Calu3 (cell line): ENCODE measurements at regions of chr17 and their contacts with region 1.

Region 1: GRCh38 chr17:59004338-59005111 is 102.2 kb downstream of the TRIM37 start:
- DNase-seq: peak; percentile 53
- H3K4me3 Mint-ChIP-seq: no peak overlapping the region
- H3K27ac Mint-ChIP-seq: no peak overlapping the region
- H3K4me1 Mint-ChIP-seq: no peaks in the 10 kb centered on the region
- H3K27me3 Mint-ChIP-seq: no peaks in the 10 kb centered on the region
- CTCF ChIP-seq: peak; percentile 72

Region 2: GRCh38 chr17:58517734-58518609 is 486.6 kb before region 1 on chr17:
- CTCF ChIA-PET with region 1: interaction called, 7 read pairs
- intact Hi-C with region 1: loop called (anchors 2 kb)
- DNase-seq: peak; percentile 97
- H3K4me3 Mint-ChIP-seq: peak overlapping the region; percentile 85
- H3K27ac Mint-ChIP-seq: peak overlapping the region; percentile 88
- H3K4me1 Mint-ChIP-seq: peaks cover 27% of the 10 kb centered on the region
- H3K27me3 Mint-ChIP-seq: no peaks in the 10 kb centered on the region
- CTCF ChIP-seq: no peak

Region 3: GRCh38 chr17:58587702-58588254 is 416.7 kb before region 1 on chr17:
- CTCF ChIA-PET with region 1: interaction called, 3 read pairs
- intact Hi-C with region 1: loop called (anchors 1 kb)
- DNase-seq: peak; percentile 44
- H3K4me3 Mint-ChIP-seq: no peak overlapping the region
- H3K27ac Mint-ChIP-seq: no peak overlapping the region
- H3K4me1 Mint-ChIP-seq: no peaks in the 10 kb centered on the region
- H3K27me3 Mint-ChIP-seq: no peaks in the 10 kb centered on the region
- CTCF ChIP-seq: peak; percentile 78

Region 4: DNA sequence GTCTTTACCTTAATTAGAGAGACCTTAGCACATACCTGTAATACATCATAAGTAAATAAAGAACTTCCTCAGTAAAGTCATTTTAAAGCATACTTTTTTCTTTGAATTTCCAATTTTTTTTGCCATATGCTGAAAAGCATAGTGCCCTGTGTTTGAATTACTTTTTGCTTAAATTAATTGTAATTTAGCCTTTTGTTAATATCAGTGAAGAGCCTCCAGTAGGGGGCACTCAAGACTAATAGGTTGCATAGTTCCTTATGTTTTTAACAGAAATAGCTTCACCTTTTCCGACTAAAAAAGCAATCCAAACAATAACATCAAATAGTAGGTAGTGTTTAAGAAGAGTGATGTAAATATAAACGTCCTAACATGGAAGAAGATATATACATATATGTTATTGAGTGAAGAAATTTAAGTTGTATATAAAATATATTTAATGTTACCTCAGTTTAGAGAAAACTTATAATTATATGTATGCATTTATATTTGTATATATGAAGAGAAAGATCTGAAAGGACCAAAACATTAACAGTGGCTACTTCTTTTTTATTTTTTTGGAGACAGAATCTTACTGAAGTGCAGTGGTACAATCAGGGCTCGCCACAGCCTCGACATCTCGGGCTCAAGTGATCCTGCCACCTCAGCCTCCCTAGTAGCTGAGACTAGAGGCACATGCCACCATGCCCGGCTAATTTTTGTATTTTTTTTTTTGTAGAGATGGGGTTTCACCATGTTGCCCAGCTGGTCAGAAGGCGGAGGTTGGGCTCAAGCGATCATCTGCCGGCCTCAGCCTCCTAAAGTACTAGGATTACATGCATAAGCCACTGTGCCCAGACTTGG is 293.4 kb before region 1 on chr17:
- CTCF ChIA-PET with region 1: interaction called, 8 read pairs
- intact Hi-C with region 1: loop called (anchors 1 kb)
- DNase-seq: peak; percentile 34
- H3K4me3 Mint-ChIP-seq: no peak overlapping the region
- H3K27ac Mint-ChIP-seq: no peak overlapping the region
- H3K4me1 Mint-ChIP-seq: no peaks in the 10 kb centered on the region
- H3K27me3 Mint-ChIP-seq: no peaks in the 10 kb centered on the region
- CTCF ChIP-seq: peak; percentile 52

Region 5: GRCh38 chr17:58870753-58871152 is 133.8 kb before region 1 on chr17:
- CTCF ChIA-PET with region 1: no interaction called
- intact Hi-C with region 1: loop called (anchors 10 kb)
- DNase-seq: peak; percentile 1
- H3K4me3 Mint-ChIP-seq: no peak overlapping the region
- H3K27ac Mint-ChIP-seq: no peak overlapping the region
- H3K4me1 Mint-ChIP-seq: no peaks in the 10 kb centered on the region
- H3K27me3 Mint-ChIP-seq: peaks cover 11% of the 10 kb centered on the region
- CTCF ChIP-seq: no peak

Region 6: DNA sequence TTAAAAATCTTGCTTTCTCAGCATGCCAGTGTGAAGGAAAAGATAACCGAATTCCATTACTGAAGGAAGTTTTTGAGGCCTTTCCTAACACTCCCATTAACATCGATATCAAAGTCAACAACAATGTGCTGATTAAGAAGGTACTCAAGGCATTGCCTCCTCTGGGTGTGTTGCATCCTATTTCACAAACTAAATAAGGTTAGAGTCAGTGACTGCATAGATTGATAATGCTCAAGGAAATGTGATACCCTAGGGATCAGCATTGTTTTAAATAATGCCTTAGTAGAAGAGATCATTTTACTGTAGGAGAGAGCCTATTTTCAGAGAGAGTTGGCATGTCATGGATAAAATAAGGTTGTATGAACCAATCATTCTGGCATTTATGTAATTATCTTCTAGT is 252.6 kb after region 1 on chr17:
- CTCF ChIA-PET with region 1: no interaction called
- intact Hi-C with region 1: no loop called
- DNase-seq: no peak
- H3K4me3 Mint-ChIP-seq: no peak overlapping the region
- H3K27ac Mint-ChIP-seq: no peak overlapping the region
- H3K4me1 Mint-ChIP-seq: no peaks in the 10 kb centered on the region
- H3K27me3 Mint-ChIP-seq: no peaks in the 10 kb centered on the region
- CTCF ChIP-seq: no peak